Activated T-helper 1 cell treated with anti-CD3 and anti-CD28 coated beads, Interleukin-12 subunit alpha, Interleukin-12 subunit beta, Interleukin-2, Interleukin-4 antibody, amounts not matched to agents 30 ng/mL and 10 ng/mL and 1 ng/mL, durations not matched to agents 14 hours and 24 hours and 36 hours (primary cell): ENCODE measurements at regions of chr20 and their contacts with region 1.

Region 1: DNA sequence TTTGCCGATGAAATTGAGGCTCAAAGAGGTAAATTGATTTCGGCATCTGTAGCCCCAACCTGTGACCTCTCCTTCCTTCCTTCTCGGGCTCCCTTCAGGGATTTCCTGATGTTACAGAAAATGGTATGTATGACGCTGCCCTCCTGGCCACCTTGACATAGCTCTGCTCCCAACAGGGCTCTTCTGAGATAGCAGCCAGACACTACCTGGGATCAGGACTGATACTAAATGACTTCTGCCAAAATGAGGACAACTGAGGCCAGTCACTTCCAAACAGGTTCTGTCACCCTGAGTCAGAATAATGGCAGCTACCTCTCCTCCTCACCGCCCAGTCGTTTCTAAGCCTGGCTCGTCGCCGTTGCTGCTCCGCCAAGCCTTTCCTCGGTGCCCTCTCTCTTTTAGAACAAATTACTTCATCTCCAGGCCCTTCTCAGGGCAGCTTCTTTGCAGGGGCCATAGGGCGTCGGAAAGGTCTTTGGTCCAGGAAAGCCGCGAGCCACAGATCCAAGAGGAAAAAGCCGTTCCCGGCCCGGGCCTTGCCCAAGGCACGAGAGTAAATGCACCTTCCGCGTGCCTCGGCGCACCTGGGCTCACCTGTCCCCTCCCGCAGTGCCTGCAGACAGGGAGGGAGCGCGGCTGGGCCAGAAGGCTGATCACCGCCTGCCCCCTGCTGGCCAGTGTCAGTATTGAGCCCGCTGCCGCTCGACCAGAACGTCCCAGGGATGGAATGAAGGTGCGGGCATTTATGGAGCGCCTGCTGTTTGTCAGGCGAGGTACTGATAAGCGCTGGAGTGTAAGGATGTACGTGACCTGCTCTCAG is 904 bp upstream of the LPIN3 start:
- DNase-seq: peak; percentile 78
- H3K4me3 Mint-ChIP-seq: peak overlapping the region; percentile 86
- H3K27ac Mint-ChIP-seq: no peak overlapping the region
- H3K4me1 Mint-ChIP-seq: peaks cover 13% of the 10 kb centered on the region
- H3K27me3 Mint-ChIP-seq: peaks cover 14% of the 10 kb centered on the region

Region 2: DNA sequence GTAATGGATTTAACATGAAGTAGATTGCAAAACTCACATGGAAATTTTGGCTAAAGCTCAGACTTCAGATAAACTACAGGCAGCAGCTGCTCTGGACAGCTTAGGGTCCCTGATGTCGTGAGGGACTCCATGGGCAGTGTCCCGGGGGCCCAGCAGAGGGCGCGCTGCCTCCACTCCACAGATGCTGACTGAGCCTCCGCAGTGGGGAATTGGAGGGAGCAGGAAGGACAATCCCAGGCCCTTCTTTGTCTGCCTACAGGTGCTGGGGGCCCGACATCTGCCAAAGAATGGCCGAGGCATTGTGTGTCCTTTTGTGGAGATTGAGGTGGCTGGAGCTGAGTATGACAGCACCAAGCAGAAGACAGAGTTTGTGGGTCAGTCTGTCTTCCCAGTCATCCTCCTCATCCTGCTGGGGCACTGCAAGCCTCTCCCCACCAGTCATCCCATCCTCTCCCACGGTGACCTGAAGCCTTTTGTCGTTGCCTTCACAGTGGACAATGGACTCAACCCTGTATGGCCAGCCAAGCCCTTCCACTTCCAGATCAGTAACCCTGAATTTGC is 166.5 kb before region 1 on chr20:
- intact Hi-C with region 1: loop called (anchors 1 kb)
- DNase-seq: peak; percentile 35
- H3K4me3 Mint-ChIP-seq: no peak overlapping the region
- H3K27ac Mint-ChIP-seq: no peak overlapping the region
- H3K4me1 Mint-ChIP-seq: peaks cover 7% of the 10 kb centered on the region
- H3K27me3 Mint-ChIP-seq: no peaks in the 10 kb centered on the region